Naive thymus-derived CD4-positive, alpha-beta T cell (primary cell): ENCODE measurements at regions of chr2 and their contacts with region 1.

Region 1: GRCh38 chr2:70301344-70302194 is at the start of gene FAM136A:
- DNase-seq: peak; percentile 81 to 93 (median 88)
- ATAC-seq: peak; percentile 98
- H3K4me3 ChIP-seq: peak within 1 kb of the TSS; percentile 83
- H3K4me3 Mint-ChIP-seq: peak within 1 kb of the TSS; percentile 87 to 97 (median 92)
- H3K27ac ChIP-seq: peak within 1 kb of the TSS; percentile 81
- H3K27ac Mint-ChIP-seq: peak within 1 kb of the TSS; percentile 84 to 94 (median 90)
- H3K4me1 ChIP-seq: peaks cover 6 to 7% of the 10 kb centered on the region in 2 donors
- H3K4me1 Mint-ChIP-seq: peaks cover 10 to 40% (median 27%) of the 10 kb centered on the region in 7 donors
- H3K27me3 ChIP-seq: no peaks in the 10 kb centered on the region
- H3K27me3 Mint-ChIP-seq: no peaks in the 10 kb centered on the region
- total RNA-seq, gene FAM136A: 16.2 to 40.9 (median 28.2) TPM

Region 2: GRCh38 chr2:69163109-69163508 is 1138.5 kb before region 1 on chr2:
- CTCF ChIA-PET with region 1: no interaction called
- POLR2A ChIA-PET with region 1: no interaction called
- intact Hi-C with region 1: no loop called
- DNase-seq: no peak
- ATAC-seq: peak; percentile 67
- H3K4me3 ChIP-seq: no peak overlapping the region
- H3K4me3 Mint-ChIP-seq: no peak overlapping the region
- H3K27ac ChIP-seq: no peak overlapping the region
- H3K27ac Mint-ChIP-seq: no peak overlapping the region
- H3K4me1 ChIP-seq: no peaks in the 10 kb centered on the region
- H3K4me1 Mint-ChIP-seq: peaks cover 0 to 5% (median 0%) of the 10 kb centered on the region in 7 donors
- H3K27me3 ChIP-seq: no peaks in the 10 kb centered on the region
- H3K27me3 Mint-ChIP-seq: peaks cover 7 to 35% (median 16%) of the 10 kb centered on the region in 5 donors

Region 3: DNA sequence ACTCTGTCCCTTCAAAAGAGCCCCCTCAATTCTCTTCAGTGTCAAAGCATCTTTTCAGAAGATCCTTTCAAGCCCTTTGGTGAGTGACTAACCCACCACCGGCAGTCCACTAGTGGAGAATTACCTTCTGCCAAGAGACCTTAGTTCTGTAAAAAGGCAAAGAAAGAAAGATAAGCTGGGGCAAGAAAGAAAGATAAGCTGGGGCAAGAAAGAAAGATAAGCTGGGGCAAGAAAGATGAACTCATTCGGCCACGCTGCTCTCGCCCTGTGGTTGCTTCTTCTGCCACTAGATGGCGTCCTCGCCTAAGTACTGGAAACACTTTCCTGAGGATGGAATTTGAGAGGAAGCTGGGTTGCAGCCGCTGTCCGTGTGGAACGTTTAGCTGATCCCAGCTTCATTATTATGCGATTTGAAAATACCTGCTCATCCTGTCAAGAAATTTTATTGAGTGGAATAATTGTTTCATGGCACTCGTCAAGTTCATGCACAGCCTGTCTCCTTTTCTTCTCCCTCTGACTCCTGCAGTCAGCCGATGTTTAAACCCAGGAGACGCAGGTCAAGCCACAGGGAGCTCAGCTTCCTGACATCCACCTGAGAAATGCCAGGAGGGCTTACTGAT is 576.9 kb before region 1 on chr2:
- CTCF ChIA-PET with region 1: interaction called, 3 read pairs
- POLR2A ChIA-PET with region 1: no interaction called
- intact Hi-C with region 1: loop called (anchors 1 to 5 kb)
- DNase-seq: peak; percentile 59 to 85 (median 74)
- ATAC-seq: peak; percentile 92
- H3K4me3 ChIP-seq: no peak overlapping the region
- H3K4me3 Mint-ChIP-seq: peak overlapping the region in 9 of 10 donors; percentile 35 to 81 (median 57)
- H3K27ac ChIP-seq: no peak overlapping the region
- H3K27ac Mint-ChIP-seq: no peak overlapping the region
- H3K4me1 ChIP-seq: peaks cover 0 to 4% of the 10 kb centered on the region in 2 donors
- H3K4me1 Mint-ChIP-seq: peaks cover 0 to 8% (median 5%) of the 10 kb centered on the region in 7 donors
- H3K27me3 ChIP-seq: no peaks in the 10 kb centered on the region
- H3K27me3 Mint-ChIP-seq: peaks cover 0 to 7% (median 0%) of the 10 kb centered on the region in 5 donors

Region 4: DNA sequence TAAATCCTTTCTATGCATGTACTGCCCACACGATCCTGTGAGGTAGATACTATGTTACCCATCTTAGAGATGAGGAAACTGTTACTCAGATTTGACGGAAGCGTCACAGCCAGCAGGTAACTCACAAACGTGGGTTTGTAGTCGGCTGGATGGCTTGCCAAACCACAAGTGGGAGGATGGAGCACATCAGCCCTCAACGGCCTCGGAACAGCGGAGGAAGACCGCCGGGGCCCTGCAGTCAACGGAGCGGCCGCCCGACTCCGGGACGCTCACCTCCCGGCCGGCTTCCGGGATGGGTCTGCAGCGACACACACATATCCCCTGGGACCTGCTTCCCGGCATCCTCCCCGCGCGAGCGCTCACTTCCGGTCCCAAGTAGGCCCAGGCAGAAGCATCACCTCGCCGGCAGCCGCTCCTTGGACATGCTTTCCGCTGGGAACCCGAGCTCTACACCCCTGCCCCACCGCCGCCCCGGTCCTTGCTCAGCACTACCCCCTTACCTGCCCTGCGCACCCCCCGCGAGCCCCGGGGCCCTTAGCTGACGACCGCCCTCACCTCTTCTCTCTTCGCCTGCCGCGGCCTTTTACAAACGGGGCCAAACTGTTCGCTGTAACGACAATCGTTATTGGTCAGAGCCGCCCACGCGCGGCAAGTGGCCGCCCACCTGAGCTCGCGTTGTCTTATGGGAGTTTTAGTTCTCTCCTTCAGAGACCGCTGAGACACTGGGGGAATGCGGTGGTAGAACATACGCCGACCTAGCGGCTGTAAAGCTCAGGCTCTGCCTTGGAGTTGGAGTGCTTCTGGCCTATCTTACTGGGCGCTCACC is 110.9 kb before region 1 on chr2 and contains the start of gene C2orf42:
- CTCF ChIA-PET with region 1: no interaction called
- POLR2A ChIA-PET with region 1: interaction called, 3 read pairs
- intact Hi-C with region 1: loop called in 1 of 2 experiments (anchors 2 kb)
- DNase-seq: peak; percentile 87 to 97 (median 96)
- ATAC-seq: peak; percentile 94
- H3K4me3 ChIP-seq: peak within 1 kb of the TSS; percentile 72
- H3K4me3 Mint-ChIP-seq: peak within 1 kb of the TSS; percentile 86 to 97 (median 93)
- H3K27ac ChIP-seq: peak within 1 kb of the TSS; percentile 93
- H3K27ac Mint-ChIP-seq: peak within 1 kb of the TSS; percentile 94 to 100 (median 99)
- H3K4me1 ChIP-seq: peaks cover 0 to 8% of the 10 kb centered on the region in 2 donors
- H3K4me1 Mint-ChIP-seq: peaks cover 7 to 24% (median 21%) of the 10 kb centered on the region in 7 donors
- H3K27me3 ChIP-seq: no peaks in the 10 kb centered on the region
- H3K27me3 Mint-ChIP-seq: peaks cover 0 to 2% (median 0%) of the 10 kb centered on the region in 5 donors
- total RNA-seq, gene C2orf42: 20.6 to 45.9 (median 30.3) TPM

Region 5: DNA sequence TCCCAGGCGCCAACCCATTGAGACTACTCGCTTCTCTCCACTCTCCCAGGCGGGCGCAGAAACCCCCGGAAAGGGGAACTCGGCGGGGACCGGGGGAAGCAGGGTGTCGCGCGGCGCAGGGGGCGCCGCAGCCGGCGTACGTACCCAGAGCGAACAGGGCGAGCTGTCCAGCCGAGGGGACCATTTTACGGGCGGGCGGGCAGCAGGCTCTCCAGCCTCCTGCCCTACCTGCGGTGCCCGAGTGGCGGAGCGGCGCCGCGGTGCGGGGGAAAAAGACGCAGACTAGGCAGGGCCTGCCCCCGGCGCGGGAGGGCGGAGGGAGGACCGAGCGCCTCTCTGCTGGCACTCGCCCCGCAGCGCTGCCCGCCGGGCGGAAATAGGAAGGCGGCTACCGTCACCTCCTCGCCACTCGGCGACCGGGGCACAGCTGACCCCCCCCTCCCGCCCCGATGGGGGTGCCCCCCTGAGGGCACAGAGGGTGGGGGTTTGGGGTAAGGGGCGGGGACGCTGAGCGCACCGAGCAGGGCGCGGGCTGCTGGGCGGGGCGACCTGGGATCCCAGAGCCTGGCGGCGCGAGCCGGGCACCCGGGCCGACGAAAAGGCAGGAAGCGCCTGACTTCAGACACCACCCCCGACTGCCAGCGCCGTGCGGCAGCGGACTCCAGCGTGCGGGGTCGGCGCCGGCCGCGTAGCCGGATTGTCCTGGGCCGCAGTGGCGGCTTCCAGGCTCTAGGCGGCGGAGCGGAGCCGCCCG is 252.2 kb after region 1 on chr2 and contains the start of gene TGFA:
- CTCF ChIA-PET with region 1: interaction called, 5 read pairs
- POLR2A ChIA-PET with region 1: no interaction called
- intact Hi-C with region 1: loop called (anchors 1 kb)
- DNase-seq: peak; percentile 51 to 69 (median 68)
- ATAC-seq: peak; percentile 85
- H3K4me3 ChIP-seq: peak within 1 kb of the TSS; percentile 65
- H3K4me3 Mint-ChIP-seq: peak within 1 kb of the TSS; percentile 79 to 96 (median 90)
- H3K27ac ChIP-seq: peak within 1 kb of the TSS; percentile 60
- H3K27ac Mint-ChIP-seq: peak within 1 kb of the TSS; percentile 46 to 89 (median 79)
- H3K4me1 ChIP-seq: peaks cover 14 to 21% of the 10 kb centered on the region in 2 donors
- H3K4me1 Mint-ChIP-seq: peaks cover 15 to 37% (median 32%) of the 10 kb centered on the region in 7 donors
- H3K27me3 ChIP-seq: no peaks in the 10 kb centered on the region
- H3K27me3 Mint-ChIP-seq: peaks cover 0 to 77% (median 4%) of the 10 kb centered on the region in 5 donors
- total RNA-seq, gene TGFA: 0.98 to 3.2 (median 2.3) TPM in 4 of 5 experiments, not detected in the other

Region 6: GRCh38 chr2:70767699-70768589 is 466.4 kb after region 1 on chr2 and contains the start of gene ADD2:
- CTCF ChIA-PET with region 1: no interaction called
- POLR2A ChIA-PET with region 1: no interaction called
- intact Hi-C with region 1: loop called in 1 of 2 experiments (anchors 5 kb)
- DNase-seq: peak; percentile 11 to 53 (median 40)
- ATAC-seq: peak; percentile 82
- H3K4me3 ChIP-seq: peak within 1 kb of the TSS; percentile 73
- H3K4me3 Mint-ChIP-seq: peak within 1 kb of the TSS; percentile 76 to 96 (median 90)
- H3K27ac ChIP-seq: peak within 1 kb of the TSS; percentile 46
- H3K27ac Mint-ChIP-seq: peak within 1 kb of the TSS; percentile 25 to 92 (median 63)
- H3K4me1 ChIP-seq: peaks cover 5 to 7% of the 10 kb centered on the region in 2 donors
- H3K4me1 Mint-ChIP-seq: peaks cover 14 to 38% (median 20%) of the 10 kb centered on the region in 7 donors
- H3K27me3 ChIP-seq: peaks cover 0 to 3% of the 10 kb centered on the region in 2 donors
- H3K27me3 Mint-ChIP-seq: peaks cover 0 to 62% (median 19%) of the 10 kb centered on the region in 5 donors
- total RNA-seq, gene ADD2: 5.8 to 18.8 (median 7.7) TPM

Region 7: GRCh38 chr2:70919672-70920366 is 618.2 kb after region 1 on chr2:
- CTCF ChIA-PET with region 1: no interaction called
- POLR2A ChIA-PET with region 1: no interaction called
- intact Hi-C with region 1: loop called in 1 of 2 experiments (anchors 1 kb)
- DNase-seq: peak; percentile 28 to 78 (median 61)
- ATAC-seq: peak; percentile 86
- H3K4me3 ChIP-seq: no peak overlapping the region
- H3K4me3 Mint-ChIP-seq: no peak overlapping the region
- H3K27ac ChIP-seq: no peak overlapping the region
- H3K27ac Mint-ChIP-seq: no peak overlapping the region
- H3K4me1 ChIP-seq: no peaks in the 10 kb centered on the region
- H3K4me1 Mint-ChIP-seq: no peaks in the 10 kb centered on the region
- H3K27me3 ChIP-seq: no peaks in the 10 kb centered on the region
- H3K27me3 Mint-ChIP-seq: peaks cover 25 to 43% (median 27%) of the 10 kb centered on the region in 5 donors

Region 8: GRCh38 chr2:71130113-71130904 is 828.7 kb after region 1 on chr2 and contains the starts of genes MCEE and MPHOSPH10:
- CTCF ChIA-PET with region 1: no interaction called
- POLR2A ChIA-PET with region 1: no interaction called
- intact Hi-C with region 1: loop called in 1 of 2 experiments (anchors 5 kb)
- DNase-seq: peak; percentile 81 to 91 (median 89)
- ATAC-seq: peak; percentile 95
- H3K4me3 ChIP-seq: peak within 1 kb of the TSS; percentile 74
- H3K4me3 Mint-ChIP-seq: no peak within 1 kb of the TSS
- H3K27ac ChIP-seq: peak within 1 kb of the TSS; percentile 87
- H3K27ac Mint-ChIP-seq: peak within 1 kb of the TSS in 1 of 9 donors; percentile 45
- H3K4me1 ChIP-seq: peaks cover 21 to 22% of the 10 kb centered on the region in 2 donors
- H3K4me1 Mint-ChIP-seq: peaks cover 5 to 33% (median 26%) of the 10 kb centered on the region in 7 donors
- H3K27me3 ChIP-seq: no peaks in the 10 kb centered on the region
- H3K27me3 Mint-ChIP-seq: no peaks in the 10 kb centered on the region
- total RNA-seq, gene MCEE: 11.6 to 27.9 (median 16.4) TPM
- total RNA-seq, gene MPHOSPH10: 28.2 to 58.9 (median 43.8) TPM